B cell (primary cell): ENCODE measurements at regions of chr22 and their contacts with region 1.

Region 1: DNA sequence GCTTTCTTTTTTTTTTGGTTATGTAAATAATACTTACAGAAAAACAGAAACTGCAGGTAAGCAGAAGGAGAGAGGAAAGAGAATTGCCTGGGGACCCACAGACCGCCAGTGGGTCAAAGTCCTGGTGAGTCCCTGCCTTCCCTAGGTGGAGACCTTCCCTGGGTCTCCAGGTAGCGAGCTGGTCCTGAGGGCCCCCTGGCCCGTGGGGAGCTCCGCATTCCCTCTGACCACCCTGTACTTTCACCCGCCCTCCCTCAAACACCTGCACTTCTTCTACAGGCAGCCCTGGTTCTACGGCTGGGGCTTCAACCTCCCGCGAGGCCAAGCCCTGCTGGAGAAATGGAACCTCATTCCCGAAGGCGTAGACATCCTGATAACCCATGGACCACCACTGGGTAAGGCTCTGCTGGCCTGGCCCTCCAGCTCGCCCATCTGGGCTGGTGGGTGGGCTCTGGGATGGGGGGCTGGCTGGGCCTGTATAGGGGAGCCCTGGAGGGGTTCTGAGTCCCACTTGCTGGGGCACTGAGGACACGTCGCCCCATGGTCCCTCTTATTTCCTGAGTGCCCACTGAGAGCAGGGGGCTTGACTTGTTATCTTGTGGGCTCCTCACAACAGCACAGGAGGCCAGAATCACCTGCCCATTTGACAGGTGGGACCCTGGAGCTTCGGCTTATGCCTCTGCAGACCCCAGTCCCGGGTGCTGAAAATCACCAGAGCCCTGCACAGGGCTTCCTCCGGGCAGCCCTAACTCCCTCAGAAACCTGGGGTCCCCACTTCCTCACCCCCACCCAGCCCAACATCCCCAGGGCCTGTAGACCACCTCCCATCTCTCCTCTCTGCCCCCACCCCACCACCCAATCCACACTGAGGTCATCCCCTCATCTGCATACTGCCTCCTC is 86.4 kb downstream of the MPPED1 start:
- DNase-seq: no peak
- ATAC-seq: no peak
- H3K4me3 ChIP-seq: no peak overlapping the region
- H3K4me3 Mint-ChIP-seq: no peak overlapping the region
- H3K27ac ChIP-seq: no peak overlapping the region
- H3K27ac Mint-ChIP-seq: no peak overlapping the region
- H3K4me1 ChIP-seq: no peaks in the 10 kb centered on the region
- H3K4me1 Mint-ChIP-seq: no peaks in the 10 kb centered on the region
- H3K27me3 ChIP-seq: no peaks in the 10 kb centered on the region
- H3K27me3 Mint-ChIP-seq: no peaks in the 10 kb centered on the region
- CTCF ChIP-seq: no peak

Region 2: DNA sequence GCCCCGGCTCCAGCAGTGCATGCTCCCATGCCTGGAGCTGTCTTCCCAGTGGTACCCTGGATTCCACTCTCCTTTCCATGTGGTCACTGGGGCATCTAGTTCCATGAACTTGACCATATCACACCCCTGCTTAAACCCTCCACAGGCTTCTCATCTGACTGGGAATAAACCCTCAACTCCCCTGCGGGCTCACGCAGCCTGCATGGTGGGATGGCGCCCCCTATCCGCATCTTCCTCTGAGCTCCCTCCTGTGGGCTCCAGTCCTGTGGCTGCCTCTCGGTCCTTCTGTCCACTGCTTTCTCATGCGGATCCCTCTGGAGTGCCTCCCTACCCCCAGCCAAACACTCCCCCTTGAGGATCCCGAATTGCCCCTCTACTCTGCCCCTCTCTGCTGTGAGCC is 269.9 kb before region 1 on chr22:
- CTCF ChIA-PET with region 1: no interaction called
- POLR2A ChIA-PET with region 1: no interaction called
- intact Hi-C with region 1: no loop called
- DNase-seq: no peak
- ATAC-seq: no peak
- H3K4me3 ChIP-seq: no peak overlapping the region
- H3K4me3 Mint-ChIP-seq: no peak overlapping the region
- H3K27ac ChIP-seq: no peak overlapping the region
- H3K27ac Mint-ChIP-seq: no peak overlapping the region
- H3K4me1 ChIP-seq: peaks cover 4 to 7% of the 10 kb centered on the region in 2 donors
- H3K4me1 Mint-ChIP-seq: peaks cover 4% of the 10 kb centered on the region
- H3K27me3 ChIP-seq: peaks cover 0 to 15% (median 0%) of the 10 kb centered on the region in 4 experiments
- H3K27me3 Mint-ChIP-seq: peaks cover 10% of the 10 kb centered on the region
- CTCF ChIP-seq: no peak

Region 3: GRCh38 chr22:43600265-43600664 is 102.1 kb after region 1 on chr22:
- CTCF ChIA-PET with region 1: no interaction called
- POLR2A ChIA-PET with region 1: interaction called, 20 read pairs
- intact Hi-C with region 1: no loop called
- DNase-seq: no peak
- ATAC-seq: no peak
- H3K4me3 ChIP-seq: no peak overlapping the region
- H3K4me3 Mint-ChIP-seq: no peak overlapping the region
- H3K27ac ChIP-seq: no peak overlapping the region
- H3K27ac Mint-ChIP-seq: no peak overlapping the region
- H3K4me1 ChIP-seq: no peaks in the 10 kb centered on the region
- H3K4me1 Mint-ChIP-seq: no peaks in the 10 kb centered on the region
- H3K27me3 ChIP-seq: no peaks in the 10 kb centered on the region
- H3K27me3 Mint-ChIP-seq: peaks cover 2% of the 10 kb centered on the region
- CTCF ChIP-seq: no peak